ENCODE measurements at regions of chr10 and their contacts with region 1.

Region 1: DNA sequence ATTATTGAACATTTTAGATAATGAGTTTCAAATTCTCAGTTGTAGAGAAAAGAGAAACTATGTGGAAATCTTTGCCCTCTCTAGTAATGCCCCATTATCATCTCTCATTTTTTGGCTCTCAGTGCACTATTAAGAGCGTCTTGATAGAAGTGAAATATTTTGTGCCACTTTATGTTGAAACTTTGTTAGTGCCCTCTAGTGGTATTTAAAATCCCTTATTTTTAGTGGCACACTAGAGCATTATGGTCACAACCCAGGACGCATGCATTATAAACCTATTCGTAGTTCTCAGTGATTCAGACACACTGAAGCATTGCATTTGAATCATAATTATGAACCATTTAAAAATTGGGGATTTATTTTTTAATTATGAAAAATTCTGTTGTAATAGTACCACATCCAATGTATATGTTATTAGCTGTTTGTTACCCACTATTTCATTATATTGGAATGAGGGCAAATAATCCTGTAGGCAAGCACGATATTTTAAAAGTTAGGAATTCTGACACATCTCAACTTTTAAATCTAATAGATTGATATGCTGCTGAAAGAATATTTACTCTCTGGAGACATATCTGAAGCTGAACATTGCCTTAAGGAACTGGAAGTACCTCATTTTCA is 21.9 kb downstream of the PDCD4 start:
- DNase-seq: no peak
- H3K4me3 ChIP-seq: no peak overlapping the region
- H3K27ac ChIP-seq: no peak overlapping the region
- H3K4me1 ChIP-seq: no peaks in the 10 kb centered on the region
- H3K27me3 ChIP-seq: no peaks in the 10 kb centered on the region
- CTCF ChIP-seq: peak; percentile 55 to 71 (median 64)
- POLR2A ChIP-seq: no peak

Region 2: GRCh38 chr10:110739811-110740271 is 153.8 kb before region 1 on chr10:
- intact Hi-C with region 1: loop called (anchors 5 kb)
- DNase-seq: no peak
- H3K4me3 ChIP-seq: no peak overlapping the region
- H3K27ac ChIP-seq: no peak overlapping the region
- H3K4me1 ChIP-seq: no peaks in the 10 kb centered on the region
- H3K27me3 ChIP-seq: no peaks in the 10 kb centered on the region
- CTCF ChIP-seq: no peak
- POLR2A ChIP-seq: no peak

Region 3: DNA sequence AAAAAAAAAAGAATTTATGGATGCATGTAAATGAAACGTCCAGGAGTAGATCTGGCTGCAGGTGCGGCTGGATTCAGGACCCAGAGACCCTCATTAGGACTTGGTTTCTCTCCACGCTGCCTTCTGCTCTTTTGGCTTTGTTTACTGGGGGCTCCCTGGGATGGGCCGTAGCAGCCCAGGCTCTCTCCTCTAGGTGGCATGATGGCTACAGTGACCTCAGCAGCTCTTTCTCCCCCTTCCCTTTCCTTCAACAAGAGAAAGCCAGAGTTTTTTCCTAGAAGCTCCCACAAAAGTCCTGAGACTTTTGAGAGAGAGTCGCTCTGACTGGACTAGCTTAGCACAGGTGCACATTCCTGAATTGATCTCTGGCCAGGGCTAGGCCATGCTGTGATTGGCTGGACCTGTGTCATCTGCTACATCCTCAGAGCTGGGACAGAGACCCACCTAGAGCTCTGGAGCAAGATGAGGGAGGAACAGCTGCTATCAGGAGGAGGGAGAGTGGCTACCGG is 89.8 kb before region 1 on chr10:
- intact Hi-C with region 1: loop called (anchors 5 kb)
- DNase-seq: peak; percentile 65 to 72
- H3K4me3 ChIP-seq: no peak overlapping the region
- H3K27ac ChIP-seq: peak overlapping the region; percentile 36 to 56
- H3K4me1 ChIP-seq: no peaks in the 10 kb centered on the region
- H3K27me3 ChIP-seq: no peaks in the 10 kb centered on the region
- CTCF ChIP-seq: peak; percentile 63 to 86 (median 80)
- POLR2A ChIP-seq: no peak

Region 4: DNA sequence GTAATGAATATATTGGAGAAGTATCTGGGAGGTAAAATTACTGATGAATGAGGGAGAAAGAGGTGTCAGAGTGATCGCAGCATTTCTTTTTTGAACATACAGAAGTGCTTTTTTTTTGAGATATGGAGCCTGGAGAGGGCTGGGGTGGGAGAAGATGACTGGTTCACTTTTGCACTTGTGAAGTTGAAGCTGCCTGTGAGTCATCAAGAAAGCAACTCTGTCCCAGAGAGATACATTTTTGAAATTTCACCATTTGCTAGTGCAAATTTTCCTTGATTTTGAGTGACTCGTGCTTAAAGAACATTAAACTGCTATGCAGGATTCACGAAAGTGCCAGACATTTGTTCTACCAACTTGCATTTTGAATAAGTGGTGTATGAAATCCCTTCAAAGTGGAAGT is 264.9 kb after region 1 on chr10:
- intact Hi-C with region 1: no loop called
- DNase-seq: no peak
- H3K4me3 ChIP-seq: no peak overlapping the region
- H3K27ac ChIP-seq: no peak overlapping the region
- H3K4me1 ChIP-seq: no peaks in the 10 kb centered on the region
- H3K27me3 ChIP-seq: no peaks in the 10 kb centered on the region
- CTCF ChIP-seq: no peak
- POLR2A ChIP-seq: no peak

Measured in uterus (tissue), 4 donors.